ENCODE measurements at regions of chr18 and their contacts with region 1.

Region 1: DNA sequence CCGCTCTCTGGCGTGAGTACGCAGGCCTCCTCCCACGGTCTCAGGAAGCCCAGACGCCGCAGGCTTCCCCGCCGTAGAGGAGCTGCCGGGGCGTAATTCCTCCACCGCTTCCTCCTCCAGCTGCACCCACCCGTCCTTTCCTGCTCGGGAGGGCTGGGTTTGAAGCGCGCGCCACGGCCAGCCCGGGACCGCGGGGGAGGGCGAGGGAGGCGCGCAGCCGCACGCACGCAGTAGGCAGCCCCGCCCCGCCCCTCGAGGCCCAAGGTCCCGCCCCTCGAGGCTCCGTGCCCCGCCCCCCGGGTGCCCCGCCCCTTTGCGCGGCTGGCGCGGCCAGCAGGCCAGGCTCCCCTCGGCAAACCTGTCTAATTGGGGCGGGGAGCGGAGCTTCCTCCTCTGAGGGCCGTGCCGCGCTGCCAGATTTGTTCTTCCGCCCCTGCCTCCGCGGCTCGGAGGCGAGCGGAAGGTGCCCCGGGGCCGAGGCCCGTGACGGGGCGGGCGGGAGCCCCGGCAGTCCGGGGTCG is at the start of gene MALT1:
- DNase-seq: peak; percentile 93
- H3K4me3 Mint-ChIP-seq: peak within 1 kb of the TSS; percentile 94
- H3K27ac Mint-ChIP-seq: peak within 1 kb of the TSS; percentile 92
- H3K4me1 Mint-ChIP-seq: peaks cover 65% of the 10 kb centered on the region
- H3K27me3 Mint-ChIP-seq: no peaks in the 10 kb centered on the region
- total RNA-seq, gene MALT1: 39.7 to 41.0 TPM

Region 2: DNA sequence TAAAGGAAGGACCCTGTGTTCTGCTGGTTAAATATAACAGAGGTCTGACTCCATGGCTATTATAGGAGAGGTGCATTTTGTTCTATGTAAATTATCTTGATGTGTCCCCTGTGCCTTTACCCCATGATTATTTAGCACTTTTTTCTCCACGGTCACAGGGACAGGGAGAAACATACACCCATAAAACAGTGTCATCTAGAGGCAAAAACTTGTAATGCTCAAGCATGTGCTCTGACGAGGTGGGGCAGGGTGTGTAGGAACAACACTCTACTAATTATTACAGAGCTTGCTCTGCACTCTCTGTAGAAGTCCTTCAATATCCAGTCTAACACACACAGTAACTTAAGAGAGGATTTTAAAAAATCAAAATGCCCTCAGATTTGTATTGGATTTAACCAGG is 439.2 kb before region 1 on chr18:
- CTCF ChIA-PET with region 1: no interaction called
- intact Hi-C with region 1: no loop called
- DNase-seq: no peak
- H3K4me3 Mint-ChIP-seq: no peak overlapping the region
- H3K27ac Mint-ChIP-seq: no peak overlapping the region
- H3K4me1 Mint-ChIP-seq: no peaks in the 10 kb centered on the region
- H3K27me3 Mint-ChIP-seq: no peaks in the 10 kb centered on the region

Region 3: GRCh38 chr18:58303363-58303762 is 367.8 kb before region 1 on chr18:
- CTCF ChIA-PET with region 1: no interaction called
- intact Hi-C with region 1: no loop called
- DNase-seq: peak; percentile 75
- H3K4me3 Mint-ChIP-seq: no peak overlapping the region
- H3K27ac Mint-ChIP-seq: peak overlapping the region; percentile 40
- H3K4me1 Mint-ChIP-seq: peaks cover 38% of the 10 kb centered on the region
- H3K27me3 Mint-ChIP-seq: peaks cover 2% of the 10 kb centered on the region

Region 4: GRCh38 chr18:58529714-58530354 is 141.3 kb before region 1 on chr18:
- CTCF ChIA-PET with region 1: interaction called, 15 read pairs
- intact Hi-C with region 1: loop called (anchors 1 kb)
- DNase-seq: peak; percentile 80
- H3K4me3 Mint-ChIP-seq: no peak overlapping the region
- H3K27ac Mint-ChIP-seq: no peak overlapping the region
- H3K4me1 Mint-ChIP-seq: peaks cover 20% of the 10 kb centered on the region
- H3K27me3 Mint-ChIP-seq: peaks cover 3% of the 10 kb centered on the region

Region 5: GRCh38 chr18:58615140-58616132 is 55.7 kb before region 1 on chr18:
- CTCF ChIA-PET with region 1: interaction called, 5 read pairs
- intact Hi-C with region 1: loop called (anchors 1 kb)
- DNase-seq: peak; percentile 91
- H3K4me3 Mint-ChIP-seq: peak overlapping the region; percentile 40
- H3K27ac Mint-ChIP-seq: peak overlapping the region; percentile 85
- H3K4me1 Mint-ChIP-seq: peaks cover 46% of the 10 kb centered on the region
- H3K27me3 Mint-ChIP-seq: no peaks in the 10 kb centered on the region

Region 6: DNA sequence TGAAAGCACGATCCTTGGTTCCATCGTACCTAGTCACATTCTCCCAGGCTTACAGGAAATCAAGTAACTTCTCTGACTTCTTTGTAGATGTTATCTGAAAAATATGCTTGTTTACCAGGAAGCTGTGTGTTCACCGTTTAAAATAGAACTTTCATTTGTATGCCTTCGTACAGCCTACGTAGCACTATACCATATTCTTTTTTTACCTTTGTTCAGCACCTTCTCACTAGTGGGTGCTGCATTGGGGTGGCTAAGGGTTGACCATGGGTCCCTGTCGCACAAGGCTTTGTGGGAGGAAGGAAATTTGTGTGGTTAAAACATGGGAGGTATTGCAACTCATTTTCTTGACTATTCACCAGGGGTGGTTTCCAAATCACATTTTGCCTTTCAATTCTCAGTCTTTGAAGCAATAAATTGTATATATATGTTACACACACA is 16.7 kb after region 1 on chr18:
- CTCF ChIA-PET with region 1: interaction called, 10 read pairs
- intact Hi-C with region 1: loop called (anchors 1 kb)
- DNase-seq: peak; percentile 64
- H3K4me3 Mint-ChIP-seq: peak overlapping the region; percentile 70
- H3K27ac Mint-ChIP-seq: peak overlapping the region; percentile 87
- H3K4me1 Mint-ChIP-seq: peaks cover 78% of the 10 kb centered on the region
- H3K27me3 Mint-ChIP-seq: no peaks in the 10 kb centered on the region

Region 7: GRCh38 chr18:58754544-58755068 is 83.4 kb after region 1 on chr18:
- CTCF ChIA-PET with region 1: interaction called, 3 read pairs
- intact Hi-C with region 1: loop called (anchors 2 kb)
- DNase-seq: no peak
- H3K4me3 Mint-ChIP-seq: no peak overlapping the region
- H3K27ac Mint-ChIP-seq: no peak overlapping the region
- H3K4me1 Mint-ChIP-seq: peaks cover 23% of the 10 kb centered on the region
- H3K27me3 Mint-ChIP-seq: no peaks in the 10 kb centered on the region

Region 8: GRCh38 chr18:59899298-59900221 is 1228.4 kb after region 1 on chr18 and contains the start of gene PMAIP1:
- CTCF ChIA-PET with region 1: no interaction called
- intact Hi-C with region 1: loop called (anchors 5 kb)
- DNase-seq: peak; percentile 90
- H3K4me3 Mint-ChIP-seq: peak within 1 kb of the TSS; percentile 94
- H3K27ac Mint-ChIP-seq: peak within 1 kb of the TSS; percentile 99
- H3K4me1 Mint-ChIP-seq: peaks cover 29% of the 10 kb centered on the region
- H3K27me3 Mint-ChIP-seq: no peaks in the 10 kb centered on the region
- total RNA-seq, gene PMAIP1: 132 to 141 TPM